Left cardiac atrium (tissue), 4 donors: ENCODE measurements at regions of chr7 and their contacts with region 1.

Region 1: GRCh38 chr7:100852048-100852872 is at the start of gene SLC12A9:
- DNase-seq: peak; percentile 95
- ATAC-seq: peak; percentile 100
- total RNA-seq, gene SLC12A9: 13.4 to 14.7 TPM

Region 2: DNA sequence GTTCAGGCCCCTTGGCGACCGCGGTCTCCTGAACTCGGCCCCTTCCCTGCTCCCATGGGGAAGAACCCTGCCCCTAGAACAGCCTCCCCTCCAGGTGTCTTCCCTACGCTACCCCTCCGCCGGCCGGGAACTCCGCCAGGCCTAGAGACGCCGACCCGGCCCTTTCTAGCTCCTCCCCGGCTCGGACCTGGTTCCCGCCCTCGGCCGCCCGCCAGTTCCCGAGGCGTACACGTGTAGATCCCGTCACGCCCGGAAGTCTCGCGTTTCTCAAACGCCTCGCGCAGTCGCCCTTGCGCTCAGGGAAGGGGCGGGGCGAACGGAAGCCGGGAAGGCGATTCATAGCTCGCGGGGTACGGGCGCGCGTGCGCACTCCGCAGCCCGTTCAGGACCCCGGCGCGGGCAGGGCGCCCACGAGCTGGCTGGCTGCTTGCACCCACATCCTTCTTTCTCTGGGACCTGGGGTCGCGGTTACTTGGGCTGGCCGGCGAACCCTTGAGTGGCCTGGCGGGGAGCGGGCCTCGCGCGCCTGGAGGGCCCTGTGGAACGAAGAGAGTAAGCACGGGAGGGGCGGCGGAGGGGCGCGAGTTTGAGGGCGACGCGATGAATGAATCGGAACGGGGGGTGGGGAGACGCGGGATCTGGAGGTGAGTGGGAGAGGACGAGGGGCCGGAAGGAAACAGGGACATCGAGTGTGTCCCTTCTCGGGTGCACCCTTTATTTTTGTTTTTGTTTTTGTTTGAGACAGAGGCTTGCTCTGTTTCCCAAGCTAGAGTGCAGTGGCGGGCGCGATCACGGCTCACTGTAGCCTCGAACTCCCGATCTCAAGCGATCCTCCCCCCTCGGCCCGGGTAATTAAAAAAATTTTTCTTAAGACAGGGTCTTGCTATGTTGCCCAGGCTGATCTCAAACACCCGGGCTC is 146.2 kb before region 1 on chr7 and contains the start of gene POP7:
- intact Hi-C with region 1: loop called in 1 of 2 experiments (anchors 5 kb)
- DNase-seq: peak; percentile 100
- ATAC-seq: peak; percentile 98 to 99
- total RNA-seq, gene POP7: 23.2 to 29.0 TPM

Region 3: DNA sequence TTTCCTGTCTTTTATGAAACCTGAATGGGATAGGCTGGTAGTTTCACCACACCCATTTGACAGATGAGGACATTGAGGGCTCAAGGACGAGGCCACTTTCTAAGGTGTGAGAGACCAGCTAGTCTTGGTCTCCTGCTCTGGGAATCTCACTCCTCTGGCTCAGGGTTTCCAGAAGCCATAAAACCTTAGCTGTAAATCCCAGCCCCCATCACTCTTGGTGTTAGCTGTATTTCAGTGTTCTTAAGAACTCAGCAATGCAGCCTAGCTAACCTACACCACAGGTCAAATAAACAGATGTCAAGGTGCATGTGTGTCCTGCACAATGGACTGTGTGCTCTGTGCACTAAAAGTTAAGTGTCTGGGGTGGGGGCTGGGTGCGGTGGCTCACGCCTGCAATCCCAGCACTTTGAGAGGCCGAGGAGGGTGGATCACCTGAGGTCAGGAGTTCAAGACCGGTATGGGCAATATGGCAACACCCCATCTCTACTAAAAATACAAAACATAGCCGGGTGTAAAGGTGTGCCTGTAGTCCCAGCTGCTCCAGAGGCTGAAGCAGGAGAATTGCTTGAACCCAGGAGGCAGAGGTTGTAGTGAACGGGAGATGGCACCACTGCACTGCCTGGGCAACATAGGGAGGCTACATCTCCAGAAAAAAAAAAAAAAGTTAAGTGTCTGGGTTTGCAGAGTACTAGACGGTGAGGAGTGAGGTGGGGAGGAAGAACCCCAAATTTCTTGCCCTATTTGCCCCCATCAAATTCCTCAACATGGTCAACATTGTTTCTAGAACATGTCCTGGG is 132.5 kb before region 1 on chr7:
- intact Hi-C with region 1: loop called in 1 of 2 experiments (anchors 5 kb)
- DNase-seq: no peak
- ATAC-seq: no peak

Region 4: GRCh38 chr7:100799014-100799896 is 53.0 kb before region 1 on chr7:
- intact Hi-C with region 1: loop called (anchors 1 to 2 kb)
- DNase-seq: peak; percentile 81
- ATAC-seq: peak; percentile 21 to 31